Activated naive CD4-positive, alpha-beta T cell treated with anti-CD3 and anti-CD28 coated beads for 36 hours (primary cell): ENCODE measurements at regions of chr4 and their contacts with region 1.

Region 1: DNA sequence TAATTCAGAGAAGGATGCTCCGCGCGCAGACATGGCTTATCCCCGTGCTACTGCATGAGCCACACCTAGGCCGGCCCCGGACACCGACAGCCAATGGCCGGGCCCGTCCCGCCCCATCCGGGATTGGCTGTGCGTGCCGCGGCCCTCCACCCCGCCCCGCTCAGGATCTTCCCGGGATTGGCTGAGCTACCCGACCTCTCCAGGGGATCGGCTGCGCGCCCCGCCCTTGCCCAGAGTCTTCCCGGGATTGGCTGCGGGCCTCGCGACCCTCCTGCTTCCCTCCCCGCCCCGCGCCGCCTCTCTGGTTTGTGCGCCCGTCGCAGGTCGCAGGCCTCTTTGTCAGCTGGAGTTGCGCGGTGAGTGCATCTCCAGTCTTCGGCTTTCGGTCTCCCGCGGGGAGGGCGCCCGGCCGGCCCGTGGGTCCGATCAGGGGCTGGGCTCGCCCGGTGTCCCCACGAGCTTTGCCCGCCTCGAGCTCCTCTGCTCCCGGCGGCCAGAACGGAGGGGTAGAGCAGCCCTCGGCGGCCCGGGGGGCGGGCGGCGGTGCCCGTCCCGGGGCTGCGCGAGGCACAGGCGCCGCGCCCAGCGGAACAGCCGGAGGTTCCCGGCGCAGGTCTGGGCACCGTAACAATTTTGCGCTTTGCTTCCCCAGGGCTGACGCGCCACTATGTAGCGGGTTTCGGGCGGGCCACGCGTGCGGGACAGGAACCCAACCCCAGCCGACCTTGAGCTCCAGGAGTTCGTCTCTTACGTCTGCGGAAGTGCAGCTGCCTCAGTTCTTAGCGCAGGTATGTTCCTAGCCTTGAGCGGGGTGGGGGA is 38.8 kb downstream of the ERVMER34-1 start:
- DNase-seq: peak; percentile 97
- H3K4me3 Mint-ChIP-seq: peak overlapping the region; percentile 96
- H3K27ac Mint-ChIP-seq: peak overlapping the region; percentile 92
- H3K4me1 Mint-ChIP-seq: peaks cover 46% of the 10 kb centered on the region
- H3K27me3 Mint-ChIP-seq: no peaks in the 10 kb centered on the region

Region 2: DNA sequence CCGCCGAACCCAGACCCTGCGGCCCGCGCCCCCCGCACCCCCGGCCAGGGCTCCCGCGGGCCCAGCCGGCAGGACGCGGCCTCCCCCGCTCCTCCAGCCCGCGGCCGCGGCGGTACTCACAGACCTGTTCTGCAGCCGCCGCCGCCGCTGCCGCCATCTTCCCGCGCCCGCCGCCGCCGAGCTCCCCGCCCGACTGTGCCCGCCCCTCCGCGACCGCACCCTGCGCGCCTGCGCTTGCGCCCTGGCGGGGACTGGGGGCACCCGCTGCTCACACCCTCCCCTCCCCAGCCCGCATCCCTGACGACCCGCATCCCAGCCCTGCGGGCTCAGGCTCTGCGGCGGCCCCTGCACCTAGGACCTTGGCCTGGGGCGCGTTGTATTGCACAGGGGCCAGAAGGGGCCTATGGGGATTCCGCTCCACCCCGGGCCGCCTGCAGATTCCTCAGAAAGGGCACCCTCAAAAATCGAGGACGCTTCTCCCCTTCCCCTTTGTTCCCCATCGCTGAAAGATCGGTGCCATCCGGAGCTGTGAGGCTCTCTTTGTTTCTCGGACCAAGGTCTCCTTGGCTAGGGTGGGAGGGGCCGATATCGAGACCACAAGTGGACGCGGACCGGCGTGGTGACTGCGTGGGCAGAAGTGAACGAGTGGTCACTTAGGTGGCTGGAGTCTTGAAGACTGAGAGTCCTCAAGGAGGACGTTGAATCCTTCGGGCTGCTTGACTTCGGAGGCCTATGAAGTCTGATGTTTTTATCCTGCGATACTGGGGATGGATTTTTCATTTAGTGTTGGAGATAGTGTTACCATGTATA is 674.1 kb before region 1 on chr4 and contains the start of gene SGCB:
- CTCF ChIA-PET with region 1: no interaction called
- intact Hi-C with region 1: loop called (anchors 10 kb)
- DNase-seq: peak; percentile 66
- H3K4me3 Mint-ChIP-seq: peak within 1 kb of the TSS; percentile 79
- H3K27ac Mint-ChIP-seq: no peak within 1 kb of the TSS
- H3K4me1 Mint-ChIP-seq: peaks cover 20% of the 10 kb centered on the region
- H3K27me3 Mint-ChIP-seq: peaks cover 13% of the 10 kb centered on the region
- total RNA-seq, gene SGCB: 7.9 to 8.5 TPM

Region 3: DNA sequence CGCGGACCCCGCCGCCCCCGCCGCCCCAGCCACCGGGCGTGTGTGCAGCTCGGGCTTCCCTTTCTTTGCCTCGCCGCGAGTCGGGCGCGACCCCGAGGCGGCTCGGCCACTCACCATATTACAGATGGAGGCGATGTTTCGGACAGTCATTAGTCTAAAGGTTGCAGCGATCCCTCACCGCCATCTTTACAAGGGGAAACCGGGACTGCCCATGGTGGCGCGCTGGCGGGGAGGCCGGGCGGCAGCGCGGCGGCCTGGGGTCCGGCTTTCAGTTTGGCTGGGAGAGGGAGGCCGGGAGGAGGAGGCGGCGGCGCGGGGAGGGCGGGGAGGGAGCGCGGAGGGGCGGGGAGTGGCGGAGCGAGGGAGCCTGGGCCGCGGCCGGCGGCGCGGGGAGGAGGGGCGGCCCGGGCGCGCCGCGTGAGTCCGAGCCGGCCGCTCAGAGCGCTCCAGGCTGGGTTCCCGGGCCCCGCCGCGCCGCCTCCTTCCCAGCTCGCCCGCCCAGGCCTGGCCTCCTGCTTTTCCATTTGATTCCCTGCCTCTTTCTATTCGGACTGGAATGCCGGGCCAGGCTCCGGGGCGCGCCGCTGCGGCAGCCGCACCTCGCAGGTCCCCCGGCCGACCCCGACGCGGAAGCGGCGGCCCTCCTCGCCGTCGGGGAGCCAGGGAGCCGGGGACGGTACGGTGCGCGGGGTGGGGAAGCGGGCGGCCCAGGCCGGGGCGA is 53.2 kb before region 1 on chr4 and contains the start of gene USP46:
- CTCF ChIA-PET with region 1: no interaction called
- intact Hi-C with region 1: loop called (anchors 1 kb)
- DNase-seq: peak; percentile 38
- H3K4me3 Mint-ChIP-seq: peak within 1 kb of the TSS; percentile 76
- H3K27ac Mint-ChIP-seq: no peak within 1 kb of the TSS
- H3K4me1 Mint-ChIP-seq: peaks cover 10% of the 10 kb centered on the region
- H3K27me3 Mint-ChIP-seq: peaks cover 29% of the 10 kb centered on the region
- total RNA-seq, gene USP46: 1.7 to 1.9 TPM

Region 4: GRCh38 chr4:52861879-52862616 is 149.7 kb after region 1 on chr4 and contains the start of gene RASL11B:
- CTCF ChIA-PET with region 1: no interaction called
- intact Hi-C with region 1: loop called (anchors 2 kb)
- DNase-seq: peak; percentile 79
- H3K4me3 Mint-ChIP-seq: peak within 1 kb of the TSS; percentile 69
- H3K27ac Mint-ChIP-seq: no peak within 1 kb of the TSS
- H3K4me1 Mint-ChIP-seq: peaks cover 3% of the 10 kb centered on the region
- H3K27me3 Mint-ChIP-seq: peaks cover 22% of the 10 kb centered on the region
- total RNA-seq, gene RASL11B: 0.24 TPM in 1 of 2 experiments, not detected in the other

Region 5: DNA sequence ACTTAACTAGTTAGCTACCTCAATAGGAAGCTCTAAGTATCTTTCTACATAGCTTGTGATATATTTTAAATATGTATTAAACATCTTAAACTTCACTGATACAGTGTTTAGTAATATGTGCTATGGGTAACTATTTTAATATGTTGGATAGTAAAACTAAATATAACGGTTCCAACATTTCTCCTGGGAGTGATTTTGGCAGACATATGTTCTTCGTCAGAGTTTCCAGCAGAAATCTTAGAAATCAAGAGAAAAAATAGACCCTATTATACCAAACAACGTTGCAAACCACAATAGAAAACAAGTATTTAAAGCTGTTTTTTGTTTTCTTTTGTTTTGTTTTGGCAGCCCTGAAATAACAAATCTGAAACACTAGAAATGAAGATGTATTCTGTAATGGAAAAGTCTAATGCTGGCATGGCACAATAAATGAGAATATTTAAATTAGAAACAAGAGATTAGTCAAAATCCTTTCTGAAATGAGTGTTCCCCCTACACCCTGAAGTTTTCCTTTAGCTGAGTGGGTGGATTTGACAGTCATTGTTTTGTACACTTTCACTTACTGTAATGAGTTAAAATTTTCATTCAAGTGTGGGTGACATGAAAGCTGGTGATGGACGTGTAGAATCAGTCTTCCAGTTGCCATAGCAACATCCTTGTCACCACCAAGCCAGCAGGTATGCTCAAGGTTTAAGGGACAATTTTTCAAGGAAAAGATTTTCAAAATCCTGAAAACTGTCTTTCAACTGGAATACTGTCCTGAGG is 419.9 kb after region 1 on chr4:
- CTCF ChIA-PET with region 1: no interaction called
- intact Hi-C with region 1: loop called (anchors 1 kb)
- DNase-seq: peak; percentile 61
- H3K4me3 Mint-ChIP-seq: no peak overlapping the region
- H3K27ac Mint-ChIP-seq: peak overlapping the region; percentile 83
- H3K4me1 Mint-ChIP-seq: peaks cover 36% of the 10 kb centered on the region
- H3K27me3 Mint-ChIP-seq: no peaks in the 10 kb centered on the region